Activated T-helper 1 cell treated with anti-CD3 and anti-CD28 coated beads, Interleukin-12 subunit alpha, Interleukin-12 subunit beta, Interleukin-2, Interleukin-4 antibody, amounts not matched to agents 30 ng/mL and 10 ng/mL and 1 ng/mL, durations not matched to agents 14 hours and 24 hours and 36 hours (primary cell): ENCODE measurements at regions of chr10 and their contacts with region 1.

Region 1: GRCh38 chr10:4849555-4850242 is 23.7 kb downstream of the AKR1E2 start:
- DNase-seq: peak; percentile 81
- H3K4me3 Mint-ChIP-seq: no peak overlapping the region
- H3K27ac Mint-ChIP-seq: peak overlapping the region; percentile 40
- H3K4me1 Mint-ChIP-seq: peaks cover 20% of the 10 kb centered on the region
- H3K27me3 Mint-ChIP-seq: no peaks in the 10 kb centered on the region

Region 2: DNA sequence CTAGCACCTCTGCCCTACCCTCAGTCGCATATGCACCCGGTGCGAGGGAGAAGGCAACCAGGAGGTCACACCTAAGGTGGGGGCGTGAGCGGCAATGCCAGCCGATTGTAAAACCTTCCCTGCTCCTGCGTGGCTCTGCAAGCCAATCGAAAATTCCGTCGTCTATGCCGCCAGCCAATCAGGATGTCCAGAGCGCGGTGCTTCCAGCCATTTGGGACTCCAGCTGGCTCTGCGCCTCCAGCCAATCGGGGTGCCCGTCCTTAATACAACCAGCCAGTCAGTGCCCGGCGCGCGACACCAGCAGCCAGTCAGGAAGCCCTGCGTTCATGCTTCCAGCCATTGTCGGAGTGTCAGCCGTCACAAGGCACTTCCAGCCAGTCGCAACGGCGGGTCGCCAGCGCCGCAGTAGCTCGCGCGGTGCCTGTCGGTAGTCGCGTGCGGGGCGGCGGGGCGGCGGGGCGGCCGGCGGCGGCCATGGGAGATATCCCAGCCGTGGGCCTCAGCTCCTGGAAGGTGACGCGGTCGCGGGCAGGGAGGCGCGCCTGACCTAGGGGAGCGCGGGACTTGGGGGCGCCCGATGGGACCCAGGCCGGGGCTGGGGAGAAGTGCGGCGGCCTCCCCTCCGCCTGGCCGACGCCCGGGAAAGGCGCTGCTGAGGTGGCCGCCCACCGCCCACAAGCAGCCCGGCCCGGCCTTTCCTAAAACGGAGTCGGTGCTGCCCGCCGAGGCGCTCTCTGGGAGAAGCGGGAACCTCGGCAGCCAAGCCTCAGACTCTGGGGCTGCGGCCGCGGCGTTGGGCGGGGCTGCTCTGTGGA is 23.6 kb before region 1 on chr10 and contains the start of gene AKR1E2:
- intact Hi-C with region 1: loop called (anchors 1 kb)
- DNase-seq: peak; percentile 82
- H3K4me3 Mint-ChIP-seq: peak within 1 kb of the TSS; percentile 82
- H3K27ac Mint-ChIP-seq: peak within 1 kb of the TSS; percentile 69
- H3K4me1 Mint-ChIP-seq: peaks cover 21% of the 10 kb centered on the region
- H3K27me3 Mint-ChIP-seq: peaks cover 45% of the 10 kb centered on the region
- total RNA-seq, gene AKR1E2: 6.2 and 6.6 TPM in 2 replicates

Region 3: GRCh38 chr10:5094265-5095205 is 244.8 kb after region 1 on chr10 and contains the start of gene AKR1C3:
- intact Hi-C with region 1: loop called (anchors 2 kb)
- DNase-seq: no peak
- H3K4me3 Mint-ChIP-seq: peak within 1 kb of the TSS; percentile 59
- H3K27ac Mint-ChIP-seq: no peak within 1 kb of the TSS
- H3K4me1 Mint-ChIP-seq: peaks cover 14% of the 10 kb centered on the region
- H3K27me3 Mint-ChIP-seq: peaks cover 2% of the 10 kb centered on the region
- total RNA-seq, gene AKR1C3: 0.26 TPM in 1 of 2 replicates, not detected in the other

Region 4: GRCh38 chr10:5385224-5385623 is 535.5 kb after region 1 on chr10:
- intact Hi-C with region 1: loop called (anchors 1 kb)
- DNase-seq: no peak
- H3K4me3 Mint-ChIP-seq: no peak overlapping the region
- H3K27ac Mint-ChIP-seq: no peak overlapping the region
- H3K4me1 Mint-ChIP-seq: no peaks in the 10 kb centered on the region
- H3K27me3 Mint-ChIP-seq: peaks cover 4% of the 10 kb centered on the region

Region 5: GRCh38 chr10:5623081-5623748 is 773.5 kb after region 1 on chr10:
- intact Hi-C with region 1: loop called (anchors 1 kb)
- DNase-seq: peak; percentile 72
- H3K4me3 Mint-ChIP-seq: no peak overlapping the region
- H3K27ac Mint-ChIP-seq: no peak overlapping the region
- H3K4me1 Mint-ChIP-seq: no peaks in the 10 kb centered on the region
- H3K27me3 Mint-ChIP-seq: peaks cover 6% of the 10 kb centered on the region